ENCODE measurements at regions of chr3 and their contacts with region 1.

Region 1: DNA sequence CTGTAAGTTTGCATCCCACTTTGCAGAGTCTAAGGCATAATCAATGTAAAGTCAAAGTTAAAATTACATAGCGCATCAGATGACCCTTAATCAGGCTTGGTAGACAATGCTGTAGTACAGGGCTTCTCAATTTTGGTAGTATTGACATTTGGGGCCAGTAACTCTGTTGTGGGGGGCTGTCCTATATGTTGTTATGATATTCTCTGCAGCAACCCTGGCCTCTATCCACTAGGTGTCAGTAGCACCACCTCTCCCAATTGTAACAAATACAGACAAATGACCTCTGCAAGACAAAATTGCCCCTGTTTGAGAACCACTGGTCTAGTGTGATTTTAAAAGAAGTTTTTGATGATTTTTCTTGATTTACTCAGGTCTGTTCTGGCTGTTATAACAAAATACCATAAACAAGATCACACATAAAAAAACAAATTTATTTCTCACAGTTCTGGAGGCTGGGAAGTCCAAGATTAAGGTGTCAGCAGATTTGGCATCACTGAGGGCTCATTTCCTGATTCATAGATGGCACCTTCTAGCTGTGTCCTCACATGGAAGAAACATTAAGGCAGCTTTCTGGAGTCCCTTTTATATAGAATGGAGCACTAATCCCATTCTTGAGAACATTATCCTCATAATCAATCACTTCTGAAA is 37.6 kb upstream of the SLC9A9 start:
- DNase-seq: peak; percentile 31
- H3K4me3 Mint-ChIP-seq: no peak overlapping the region
- H3K27ac Mint-ChIP-seq: no peak overlapping the region
- H3K4me1 Mint-ChIP-seq: no peaks in the 10 kb centered on the region
- H3K27me3 Mint-ChIP-seq: peaks cover 1% of the 10 kb centered on the region

Region 2: DNA sequence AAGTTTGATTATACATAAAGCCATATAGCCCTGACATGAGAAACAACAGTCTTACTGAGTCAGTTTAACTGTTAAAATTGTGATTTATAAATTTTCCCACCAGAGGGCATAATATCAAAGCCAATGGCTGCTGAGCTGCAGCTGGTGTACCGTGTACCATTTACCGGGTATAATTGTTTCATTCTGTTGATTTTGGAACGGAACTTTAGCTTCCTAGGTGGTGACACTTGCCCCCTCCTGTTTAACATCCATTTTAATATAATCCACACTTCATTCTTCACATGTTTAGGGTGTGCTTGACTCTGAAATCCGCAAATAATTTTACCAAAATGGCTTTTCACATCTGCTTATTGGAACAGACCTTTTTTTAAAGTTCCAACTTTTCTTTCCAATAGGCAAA is 110.4 kb before region 1 on chr3:
- CTCF ChIA-PET with region 1: interaction called, 3 read pairs
- POLR2A ChIA-PET with region 1: no interaction called
- intact Hi-C with region 1: loop called (anchors 5 kb)
- DNase-seq: no peak
- H3K4me3 Mint-ChIP-seq: no peak overlapping the region
- H3K27ac Mint-ChIP-seq: no peak overlapping the region
- H3K4me1 Mint-ChIP-seq: peaks cover 3% of the 10 kb centered on the region
- H3K27me3 Mint-ChIP-seq: no peaks in the 10 kb centered on the region

Region 3: DNA sequence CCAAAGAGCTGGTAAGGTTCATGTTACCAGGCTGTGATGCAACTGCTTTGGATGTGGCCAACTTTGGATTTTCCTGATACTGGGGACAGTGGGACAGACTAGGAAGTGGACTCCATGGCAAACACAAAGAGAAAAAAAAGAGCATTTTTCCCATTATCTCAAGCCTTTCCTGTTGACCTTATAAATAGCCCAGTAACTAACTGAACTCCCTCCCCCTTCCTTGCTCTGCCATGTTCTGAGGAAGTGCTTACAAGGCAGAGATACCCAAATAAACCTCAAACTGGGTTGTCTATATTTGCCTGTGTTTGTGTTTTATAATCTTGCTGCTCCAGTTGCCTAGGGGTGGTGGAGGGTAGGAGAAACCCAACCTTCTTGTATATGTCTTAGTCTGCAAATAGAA is 10.4 kb before region 1 on chr3:
- CTCF ChIA-PET with region 1: interaction called, 10 read pairs
- POLR2A ChIA-PET with region 1: no interaction called
- intact Hi-C with region 1: no loop called
- DNase-seq: no peak
- H3K4me3 Mint-ChIP-seq: no peak overlapping the region
- H3K27ac Mint-ChIP-seq: no peak overlapping the region
- H3K4me1 Mint-ChIP-seq: peaks cover 4% of the 10 kb centered on the region
- H3K27me3 Mint-ChIP-seq: no peaks in the 10 kb centered on the region

Region 4: GRCh38 chr3:143951351-143951971 is 65.6 kb after region 1 on chr3:
- CTCF ChIA-PET with region 1: interaction called, 8 read pairs
- POLR2A ChIA-PET with region 1: no interaction called
- intact Hi-C with region 1: loop called (anchors 1 kb)
- DNase-seq: peak; percentile 49
- H3K4me3 Mint-ChIP-seq: no peak overlapping the region
- H3K27ac Mint-ChIP-seq: no peak overlapping the region
- H3K4me1 Mint-ChIP-seq: no peaks in the 10 kb centered on the region
- H3K27me3 Mint-ChIP-seq: no peaks in the 10 kb centered on the region

Region 5: GRCh38 chr3:144109944-144110343 is 224.0 kb after region 1 on chr3:
- CTCF ChIA-PET with region 1: no interaction called
- POLR2A ChIA-PET with region 1: no interaction called
- intact Hi-C with region 1: loop called (anchors 10 kb)
- DNase-seq: no peak
- H3K4me3 Mint-ChIP-seq: no peak overlapping the region
- H3K27ac Mint-ChIP-seq: no peak overlapping the region
- H3K4me1 Mint-ChIP-seq: peaks cover 5% of the 10 kb centered on the region
- H3K27me3 Mint-ChIP-seq: no peaks in the 10 kb centered on the region

Region 6: DNA sequence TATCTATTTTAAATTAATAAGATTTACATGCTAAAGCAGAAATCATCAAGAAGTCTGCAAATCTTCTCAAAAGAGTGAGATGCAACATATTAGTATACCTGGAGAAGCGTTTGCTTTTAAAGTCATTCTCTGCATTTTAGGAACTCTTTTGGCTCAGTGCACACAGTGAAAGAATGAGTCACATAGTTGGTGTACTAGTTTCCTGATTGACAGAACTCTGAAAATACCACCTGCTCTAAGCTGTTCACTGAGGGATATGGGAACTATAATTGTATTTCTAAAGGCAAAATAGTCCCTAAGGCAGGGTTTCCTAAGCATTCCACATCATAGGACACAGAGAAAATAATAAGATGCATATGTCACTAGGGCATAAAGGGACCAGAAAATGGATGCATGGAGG is 924.3 kb after region 1 on chr3:
- CTCF ChIA-PET with region 1: no interaction called
- POLR2A ChIA-PET with region 1: no interaction called
- intact Hi-C with region 1: no loop called
- DNase-seq: no peak
- H3K4me3 Mint-ChIP-seq: no peak overlapping the region
- H3K27ac Mint-ChIP-seq: no peak overlapping the region
- H3K4me1 Mint-ChIP-seq: no peaks in the 10 kb centered on the region
- H3K27me3 Mint-ChIP-seq: no peaks in the 10 kb centered on the region

Measured in activated CD4-positive, alpha-beta memory T cell treated with anti-CD3 and anti-CD28 coated beads for 36 hours (primary cell).